Caco-2 (cell line): ENCODE measurements at regions of chr14 and their contacts with region 1.

Region 1: GRCh38 chr14:73613046-73613383 is 698 bp downstream of the ACOT6 start:
- DNase-seq: no peak
- H3K4me3 ChIP-seq: peak overlapping the region; percentile 64
- H3K4me3 Mint-ChIP-seq: peak overlapping the region; percentile 80
- H3K27ac Mint-ChIP-seq: no peak overlapping the region
- H3K4me1 ChIP-seq: peaks cover 8% of the 10 kb centered on the region
- H3K4me1 Mint-ChIP-seq: peaks cover 5% of the 10 kb centered on the region
- H3K27me3 ChIP-seq: no peaks in the 10 kb centered on the region
- H3K27me3 Mint-ChIP-seq: no peaks in the 10 kb centered on the region
- CTCF ChIP-seq: no peak

Region 2: DNA sequence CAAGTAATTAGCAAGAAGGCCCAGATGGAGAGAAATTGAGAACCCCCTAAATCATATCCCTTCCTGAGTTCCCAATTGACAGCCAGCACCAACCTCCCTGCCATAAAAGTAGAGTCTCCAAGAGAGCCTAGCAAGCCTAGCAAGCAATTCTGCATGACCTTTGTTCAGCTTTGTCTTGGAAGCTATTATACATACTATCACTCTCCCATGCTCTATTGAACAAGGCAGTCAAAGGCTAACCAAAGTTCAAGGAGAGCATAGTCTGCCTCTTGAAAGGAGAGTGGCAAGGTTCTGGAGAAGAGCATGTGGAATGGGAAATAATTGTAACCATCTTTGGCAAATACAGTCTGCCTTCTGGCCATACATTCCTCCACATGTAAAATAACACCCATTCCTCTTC is 13.5 kb before region 1 on chr14:
- CTCF ChIA-PET with region 1: no interaction called
- POLR2A ChIA-PET with region 1: no interaction called
- intact Hi-C with region 1: loop called (anchors 2 kb)
- DNase-seq: no peak
- H3K4me3 ChIP-seq: no peak overlapping the region
- H3K4me3 Mint-ChIP-seq: no peak overlapping the region
- H3K27ac Mint-ChIP-seq: no peak overlapping the region
- H3K4me1 ChIP-seq: peaks cover 12% of the 10 kb centered on the region
- H3K4me1 Mint-ChIP-seq: peaks cover 12% of the 10 kb centered on the region
- H3K27me3 ChIP-seq: no peaks in the 10 kb centered on the region
- H3K27me3 Mint-ChIP-seq: no peaks in the 10 kb centered on the region
- CTCF ChIP-seq: no peak

Region 3: DNA sequence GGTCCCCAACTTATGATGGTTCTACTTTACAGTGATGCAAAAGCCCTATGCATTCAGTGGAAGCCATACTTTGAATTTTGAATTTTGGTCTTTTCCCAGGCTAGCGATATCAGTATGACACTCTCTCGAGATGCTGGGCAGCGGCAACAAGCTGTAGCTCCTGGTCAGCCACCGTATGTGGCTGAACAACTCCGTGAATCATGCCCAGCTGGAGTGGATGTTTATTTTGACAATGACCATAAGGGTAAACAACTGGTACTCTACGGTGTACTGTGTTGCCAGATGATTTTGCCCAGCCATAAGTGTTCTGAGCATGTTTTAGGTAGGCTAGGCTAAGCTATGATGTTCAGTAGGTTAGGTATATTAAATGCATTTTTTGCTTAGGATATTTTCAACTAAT is 265.4 kb after region 1 on chr14:
- CTCF ChIA-PET with region 1: no interaction called
- POLR2A ChIA-PET with region 1: no interaction called
- intact Hi-C with region 1: no loop called
- DNase-seq: no peak
- H3K4me3 ChIP-seq: no peak overlapping the region
- H3K4me3 Mint-ChIP-seq: no peak overlapping the region
- H3K27ac Mint-ChIP-seq: no peak overlapping the region
- H3K4me1 ChIP-seq: no peaks in the 10 kb centered on the region
- H3K4me1 Mint-ChIP-seq: peaks cover 4% of the 10 kb centered on the region
- H3K27me3 ChIP-seq: no peaks in the 10 kb centered on the region
- H3K27me3 Mint-ChIP-seq: no peaks in the 10 kb centered on the region
- CTCF ChIP-seq: no peak